ENCODE measurements at regions of chr18 and their contacts with region 1.

Region 1: GRCh38 chr18:6729247-6730091 is at the start of gene ARHGAP28:
- DNase-seq: peak; percentile 24
- ATAC-seq: peak; percentile 64
- H3K4me3 Mint-ChIP-seq: peak within 1 kb of the TSS; percentile 62
- H3K27ac Mint-ChIP-seq: no peak within 1 kb of the TSS
- H3K4me1 Mint-ChIP-seq: peaks cover 4% of the 10 kb centered on the region
- H3K27me3 Mint-ChIP-seq: peaks cover 18% of the 10 kb centered on the region
- CTCF ChIP-seq: no peak
- total RNA-seq, gene ARHGAP28: not detected

Region 2: GRCh38 chr18:6659963-6660725 is 69.3 kb before region 1 on chr18:
- CTCF ChIA-PET with region 1: no interaction called
- POLR2A ChIA-PET with region 1: no interaction called
- intact Hi-C with region 1: loop called (anchors 10 kb)
- DNase-seq: no peak
- ATAC-seq: no peak
- H3K4me3 Mint-ChIP-seq: no peak overlapping the region
- H3K27ac Mint-ChIP-seq: no peak overlapping the region
- H3K4me1 Mint-ChIP-seq: no peaks in the 10 kb centered on the region
- H3K27me3 Mint-ChIP-seq: no peaks in the 10 kb centered on the region
- CTCF ChIP-seq: no peak

Measured in activated CD8-positive, alpha-beta T cell treated with anti-CD3 and anti-CD28 coated beads for 36 hours (primary cell).